ENCODE measurements at regions of chr17 and their contacts with region 1.

Region 1: DNA sequence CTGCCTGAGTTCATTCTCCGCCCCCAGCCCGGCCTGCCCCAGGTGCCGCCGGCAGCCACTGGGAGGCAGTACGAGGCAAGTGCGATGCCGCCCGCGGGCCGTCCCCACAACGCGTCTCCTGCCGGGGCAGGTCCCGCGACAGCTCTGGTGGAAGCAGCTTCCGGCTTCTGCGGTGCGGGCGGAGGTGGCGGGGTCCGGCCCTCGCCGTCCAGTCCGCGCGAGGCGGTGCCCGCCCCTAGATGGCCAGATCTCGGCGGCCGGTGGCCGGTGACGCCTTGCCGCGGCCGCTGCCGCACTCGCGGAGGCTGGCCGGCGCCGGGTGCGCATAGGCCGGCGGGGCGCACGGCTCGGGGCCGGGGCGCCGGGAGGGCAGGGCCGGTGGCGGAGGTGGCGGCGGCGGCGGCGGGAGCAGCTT is 1.8 kb downstream of the GJD3 start:
- DNase-seq: peak; percentile 96
- H3K4me3 Mint-ChIP-seq: peak overlapping the region; percentile 83
- H3K27ac Mint-ChIP-seq: peak overlapping the region; percentile 67
- H3K4me1 Mint-ChIP-seq: peaks cover 20% of the 10 kb centered on the region
- H3K27me3 Mint-ChIP-seq: no peaks in the 10 kb centered on the region

Region 2: DNA sequence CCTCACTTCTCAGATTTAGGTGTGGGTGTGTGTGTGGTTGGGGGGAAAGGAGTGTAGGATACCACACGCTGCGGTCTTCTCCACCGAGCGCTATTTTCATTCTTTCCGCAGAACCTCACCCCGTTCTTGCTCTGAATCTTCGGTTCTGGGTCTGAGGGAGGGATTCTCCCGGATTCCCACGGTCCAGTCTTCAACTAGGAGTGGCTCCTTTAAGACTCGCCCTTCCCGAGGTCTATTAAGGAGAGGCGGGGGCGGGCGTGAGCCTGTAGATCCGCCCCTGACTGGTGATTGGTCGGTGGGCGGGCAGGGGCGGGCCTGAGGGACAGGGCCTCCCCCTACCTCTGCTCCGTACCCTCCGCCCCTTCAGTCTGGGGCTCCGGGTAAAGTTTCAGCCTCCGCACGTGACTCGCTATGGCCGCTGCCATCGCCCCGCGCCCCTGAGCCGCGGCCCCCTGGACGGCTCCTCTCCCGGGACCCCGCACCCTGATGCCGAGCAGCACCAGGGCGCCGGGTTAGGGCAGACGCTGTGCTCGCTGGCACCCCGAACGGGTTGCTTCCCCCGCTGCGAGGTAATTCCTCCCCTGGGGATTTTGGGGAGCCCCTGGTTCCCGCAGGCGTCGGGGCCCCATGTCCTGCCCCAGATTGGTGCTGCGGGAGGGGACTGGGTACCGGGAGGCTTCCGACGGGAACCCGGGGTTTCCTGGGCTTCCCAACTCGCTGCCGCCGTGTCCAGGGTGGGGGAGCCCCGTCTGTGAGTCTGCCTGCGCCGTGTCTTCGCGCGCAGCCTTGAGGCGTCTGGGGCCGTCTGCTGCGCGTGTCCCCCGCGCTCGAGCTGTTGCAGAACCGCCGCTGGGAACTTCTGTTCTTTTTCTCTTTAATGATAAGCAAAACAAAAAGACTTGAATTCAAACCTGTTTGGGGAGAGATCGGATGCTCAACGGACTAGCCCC is 44.5 kb before region 1 on chr17:
- intact Hi-C with region 1: no loop called
- DNase-seq: peak; percentile 97
- H3K4me3 Mint-ChIP-seq: peak overlapping the region; percentile 97
- H3K27ac Mint-ChIP-seq: peak overlapping the region; percentile 98
- H3K4me1 Mint-ChIP-seq: peaks cover 77% of the 10 kb centered on the region
- H3K27me3 Mint-ChIP-seq: peaks cover 4% of the 10 kb centered on the region

Region 3: GRCh38 chr17:40399185-40399584 is 36.5 kb after region 1 on chr17:
- intact Hi-C with region 1: loop called (anchors 5 kb)
- DNase-seq: peak; percentile 65
- H3K4me3 Mint-ChIP-seq: no peak overlapping the region
- H3K27ac Mint-ChIP-seq: peak overlapping the region; percentile 59
- H3K4me1 Mint-ChIP-seq: peaks cover 27% of the 10 kb centered on the region
- H3K27me3 Mint-ChIP-seq: no peaks in the 10 kb centered on the region

Region 4: GRCh38 chr17:40417609-40418427 is 55.1 kb after region 1 on chr17 and contains the start of gene TOP2A:
- intact Hi-C with region 1: loop called (anchors 1 kb)
- DNase-seq: peak; percentile 99
- H3K4me3 Mint-ChIP-seq: peak within 1 kb of the TSS; percentile 99
- H3K27ac Mint-ChIP-seq: peak within 1 kb of the TSS; percentile 97
- H3K4me1 Mint-ChIP-seq: peaks cover 31% of the 10 kb centered on the region
- H3K27me3 Mint-ChIP-seq: no peaks in the 10 kb centered on the region
- total RNA-seq, gene TOP2A: 189 and 194 TPM in 2 replicates

Region 5: GRCh38 chr17:40450175-40450574 is 87.5 kb after region 1 on chr17:
- intact Hi-C with region 1: loop called (anchors 1 kb)
- DNase-seq: peak; percentile 83
- H3K4me3 Mint-ChIP-seq: no peak overlapping the region
- H3K27ac Mint-ChIP-seq: peak overlapping the region; percentile 37
- H3K4me1 Mint-ChIP-seq: peaks cover 55% of the 10 kb centered on the region
- H3K27me3 Mint-ChIP-seq: no peaks in the 10 kb centered on the region

Region 6: DNA sequence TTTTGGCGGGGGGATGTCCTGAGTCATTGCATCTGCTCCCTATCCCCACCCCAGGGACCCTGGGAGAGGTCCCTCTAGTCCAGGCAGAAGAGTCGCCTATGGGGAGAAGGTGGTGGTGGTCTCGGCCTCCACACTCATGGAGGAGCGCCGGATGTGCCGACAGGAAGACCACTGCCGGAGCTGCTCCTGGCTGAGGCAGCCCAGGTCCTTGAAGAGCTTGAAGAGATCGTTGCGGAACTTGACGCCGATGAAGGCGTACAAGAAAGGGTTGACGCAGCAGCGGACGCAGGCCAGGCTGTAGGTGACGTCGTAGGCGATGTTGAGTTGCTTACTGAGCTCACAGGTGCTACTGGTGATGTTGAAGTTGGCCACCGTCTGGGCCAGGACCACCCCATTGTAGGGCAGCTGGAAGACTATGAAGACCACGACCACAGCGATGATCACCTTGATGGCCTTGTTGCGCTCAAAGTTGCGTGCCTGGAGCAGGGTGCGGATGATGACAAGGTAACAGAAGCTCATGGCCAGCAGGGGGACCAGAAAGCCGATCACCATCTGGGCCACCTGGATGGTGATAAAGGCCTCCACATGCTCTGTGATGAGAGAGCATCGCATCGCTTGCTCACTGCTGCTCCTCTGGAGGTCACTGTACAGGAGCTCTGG is 192.1 kb after region 1 on chr17:
- intact Hi-C with region 1: loop called (anchors 1 kb)
- DNase-seq: no peak
- H3K4me3 Mint-ChIP-seq: peak overlapping the region; percentile 79
- H3K27ac Mint-ChIP-seq: peak overlapping the region; percentile 88
- H3K4me1 Mint-ChIP-seq: peaks cover 85% of the 10 kb centered on the region
- H3K27me3 Mint-ChIP-seq: no peaks in the 10 kb centered on the region